BJ (cell line): ENCODE measurements at regions of chr1 and their contacts with region 1.

Region 1: DNA sequence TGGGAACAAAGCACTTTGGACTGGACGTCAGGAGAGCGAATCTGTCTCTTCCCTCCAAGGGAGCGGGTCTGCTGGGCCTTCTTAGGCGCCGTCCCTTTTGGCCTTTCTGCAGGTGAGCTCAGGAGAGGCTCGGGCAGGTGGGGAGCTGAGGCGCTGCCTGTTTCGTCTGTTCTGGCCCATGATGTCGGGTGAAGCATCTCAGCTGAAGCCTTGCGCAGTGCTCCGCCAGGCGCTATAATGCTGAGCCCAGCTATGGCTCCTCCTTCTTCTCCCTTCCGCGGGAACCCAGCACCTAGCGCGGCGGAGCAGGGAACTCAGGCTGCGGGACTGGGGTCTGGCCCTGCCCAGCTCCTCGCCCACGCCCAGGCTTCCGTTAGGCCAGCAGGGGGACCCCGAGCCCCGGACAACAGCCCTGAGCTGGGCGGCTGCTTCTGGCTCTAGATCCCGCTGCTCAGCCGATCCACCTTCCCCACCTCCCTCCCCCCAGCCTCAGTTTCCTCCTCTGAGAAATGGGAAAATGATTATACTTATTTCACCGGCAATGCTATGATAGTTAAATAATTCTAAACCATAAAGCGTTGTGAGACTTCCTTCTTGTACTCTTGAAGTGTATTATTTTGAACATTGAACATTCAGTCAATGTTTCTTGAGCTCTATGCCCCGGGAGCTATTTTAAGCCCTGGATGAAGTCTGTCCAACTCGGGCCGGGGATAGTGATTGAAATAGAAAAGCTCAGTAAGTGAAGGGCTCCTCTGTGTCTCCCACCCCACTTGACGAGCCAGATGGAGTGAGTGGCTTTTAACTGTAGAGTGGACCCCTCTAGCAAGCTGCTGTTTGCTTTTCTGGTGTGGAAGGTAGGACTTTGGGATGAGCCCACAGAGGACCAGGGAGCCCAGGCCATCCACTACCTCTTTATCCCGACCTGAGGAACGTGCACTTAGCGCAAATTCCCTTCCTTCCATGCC is 9.6 kb upstream of the ADORA1 start:
- DNase-seq: no peak
- H3K4me3 ChIP-seq: no peak overlapping the region
- H3K27me3 ChIP-seq: peaks cover 38% of the 10 kb centered on the region
- CTCF ChIP-seq: peak; percentile 88

Region 2: DNA sequence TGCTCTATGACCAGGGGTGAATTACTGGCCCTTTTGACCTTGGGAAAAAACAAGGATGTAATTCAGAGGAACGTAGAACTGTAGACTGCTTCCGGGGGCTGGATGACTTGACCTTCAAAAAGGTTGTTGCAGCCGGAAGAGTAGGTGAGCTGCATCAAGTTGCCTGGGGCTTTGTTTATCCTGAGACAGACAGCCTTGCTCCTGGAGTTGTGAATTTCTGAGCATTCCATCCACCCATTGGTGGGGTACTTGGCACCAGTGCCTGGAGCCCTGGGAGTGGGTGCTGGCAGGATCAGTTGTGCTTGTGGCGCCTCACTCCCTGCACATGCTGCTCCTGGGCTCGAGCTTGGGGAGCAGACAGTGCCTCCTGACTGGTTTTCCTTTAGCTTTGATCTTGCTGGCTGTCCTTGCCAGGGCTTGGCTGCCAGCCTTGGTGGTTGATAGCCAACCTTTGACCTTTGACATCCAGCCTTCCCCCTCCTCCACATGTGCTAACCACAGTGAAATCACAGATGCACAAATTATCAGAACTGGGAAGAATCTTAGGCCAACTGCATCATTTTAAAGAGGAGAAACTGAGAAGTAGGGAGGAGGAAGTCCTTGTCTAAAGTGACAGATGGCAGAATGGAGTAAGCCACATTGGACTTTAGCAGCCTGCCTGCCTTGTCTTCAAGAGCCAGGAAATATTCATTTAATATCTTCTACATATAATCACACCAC is 15.8 kb before region 1 on chr1:
- CTCF ChIA-PET with region 1: interaction called, 18 read pairs
- POLR2A ChIA-PET with region 1: no interaction called
- DNase-seq: no peak
- H3K4me3 ChIP-seq: no peak overlapping the region
- H3K27me3 ChIP-seq: peaks cover 17% of the 10 kb centered on the region
- CTCF ChIP-seq: no peak

Region 3: GRCh38 chr1:203202431-203203245 is 84.7 kb after region 1 on chr1:
- CTCF ChIA-PET with region 1: interaction called, 32 read pairs
- POLR2A ChIA-PET with region 1: no interaction called
- DNase-seq: peak; percentile 69
- H3K4me3 ChIP-seq: no peak overlapping the region
- H3K27me3 ChIP-seq: no peaks in the 10 kb centered on the region
- CTCF ChIP-seq: no peak